ENCODE measurements at regions of chr15 and their contacts with region 1.

Region 1: DNA sequence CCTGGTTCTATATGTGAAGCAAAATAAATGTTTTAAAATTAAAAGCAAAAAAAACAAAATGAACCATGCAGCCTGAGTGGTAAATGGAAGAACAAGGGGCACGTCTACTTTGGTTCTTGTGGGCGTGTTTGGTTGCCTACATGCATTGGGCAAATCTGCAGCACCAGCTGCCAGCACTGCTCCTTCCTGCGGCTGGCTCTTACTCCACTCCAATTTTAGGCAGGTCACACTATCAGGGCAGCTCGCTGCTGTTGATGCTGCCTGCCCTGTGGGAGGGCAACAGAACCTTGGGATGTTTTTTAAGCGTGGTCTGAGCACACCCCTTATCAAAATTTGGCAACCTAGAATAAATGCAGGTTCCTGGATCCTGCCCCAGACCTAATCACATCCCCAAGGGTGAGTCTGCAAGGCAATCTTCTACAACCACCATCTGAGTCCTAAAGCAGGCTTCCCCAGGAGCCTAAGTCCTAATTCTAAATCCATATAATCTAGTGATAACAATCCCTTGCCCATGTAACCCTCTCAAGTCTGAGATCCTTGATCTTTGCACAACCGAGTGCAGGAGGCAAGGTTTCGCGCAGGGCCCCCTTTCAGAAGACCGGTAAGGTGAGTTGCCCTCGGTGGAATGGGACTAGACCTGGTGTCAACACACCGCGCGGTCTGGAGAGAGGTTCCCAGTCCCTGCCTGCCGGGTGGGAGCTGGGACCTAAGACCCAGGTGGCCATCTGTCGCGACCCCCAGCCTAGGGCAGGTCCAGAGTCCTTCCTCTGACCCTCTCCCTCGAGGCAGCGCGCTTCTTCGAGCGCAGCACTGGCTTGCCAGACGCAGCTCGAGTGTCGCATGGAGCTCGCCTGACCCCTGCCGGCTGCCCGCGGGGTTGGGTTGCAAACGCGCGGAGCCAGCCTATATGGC is 15.9 kb downstream of the IVD start:
- DNase-seq: peak; percentile 52
- ATAC-seq: peak; percentile 99
- H3K4me3 ChIP-seq: no peak overlapping the region
- H3K27ac ChIP-seq: no peak overlapping the region
- H3K4me1 ChIP-seq: no peaks in the 10 kb centered on the region
- H3K27me3 ChIP-seq: no peaks in the 10 kb centered on the region; the same call in 1 of the 2 replicates
- CTCF ChIP-seq: peak; percentile 93
- POLR2A ChIP-seq: no peak
- RAD21 ChIP-seq: peak; percentile 96

Region 2: GRCh38 chr15:40044717-40045571 is 376.6 kb before region 1 on chr15:
- CTCF ChIA-PET with region 1: no interaction called
- POLR2A ChIA-PET with region 1: no interaction called
- dilution Hi-C with region 1: no loop called
- in situ Hi-C with region 1: loop called (anchors 10 kb)
- intact Hi-C with region 1: no loop called
- DNase-seq: peak; percentile 76
- ATAC-seq: peak; percentile 99
- H3K4me3 ChIP-seq: no peak overlapping the region
- H3K27ac ChIP-seq: no peak overlapping the region
- H3K4me1 ChIP-seq: peaks cover 20% of the 10 kb centered on the region
- H3K27me3 ChIP-seq: no peaks in the 10 kb centered on the region
- CTCF ChIP-seq: peak; percentile 99
- POLR2A ChIP-seq: peak; percentile 74
- RAD21 ChIP-seq: peak; percentile 100

Region 3: GRCh38 chr15:40274350-40275274 is 146.9 kb before region 1 on chr15:
- CTCF ChIA-PET with region 1: interaction called, 3 read pairs
- POLR2A ChIA-PET with region 1: no interaction called
- dilution Hi-C with region 1: no loop called
- in situ Hi-C with region 1: loop called (anchors 5 kb)
- intact Hi-C with region 1: loop called (anchors 1 kb)
- DNase-seq: peak; percentile 78
- ATAC-seq: peak; percentile 86
- H3K4me3 ChIP-seq: no peak overlapping the region
- H3K27ac ChIP-seq: no peak overlapping the region
- H3K4me1 ChIP-seq: no peaks in the 10 kb centered on the region
- H3K27me3 ChIP-seq: peaks cover 21% of the 10 kb centered on the region
- CTCF ChIP-seq: peak; percentile 100; the same call in 1 of the 2 replicates
- POLR2A ChIP-seq: no peak
- RAD21 ChIP-seq: peak; percentile 98

Region 4: GRCh38 chr15:40338041-40338657 is 83.4 kb before region 1 on chr15:
- CTCF ChIA-PET with region 1: interaction called, 5 read pairs
- POLR2A ChIA-PET with region 1: no interaction called
- dilution Hi-C with region 1: no loop called
- in situ Hi-C with region 1: no loop called
- intact Hi-C with region 1: loop called (anchors 1 kb)
- DNase-seq: peak; percentile 60
- ATAC-seq: peak; percentile 8; the same call in 1 of the 2 replicates
- H3K4me3 ChIP-seq: no peak overlapping the region
- H3K27ac ChIP-seq: peak overlapping the region; percentile 97
- H3K4me1 ChIP-seq: peaks cover 36% of the 10 kb centered on the region
- H3K27me3 ChIP-seq: no peaks in the 10 kb centered on the region
- CTCF ChIP-seq: peak; percentile 69
- POLR2A ChIP-seq: no peak
- RAD21 ChIP-seq: peak; percentile 76

Region 5: GRCh38 chr15:40367686-40368611 is 53.6 kb before region 1 on chr15:
- CTCF ChIA-PET with region 1: no interaction called
- POLR2A ChIA-PET with region 1: no interaction called
- dilution Hi-C with region 1: no loop called
- in situ Hi-C with region 1: no loop called
- intact Hi-C with region 1: loop called (anchors 1 kb)
- DNase-seq: peak; percentile 87
- ATAC-seq: peak; percentile 95
- H3K4me3 ChIP-seq: no peak overlapping the region
- H3K27ac ChIP-seq: no peak overlapping the region; the same call in 1 of the 2 replicates
- H3K4me1 ChIP-seq: peaks cover 2% of the 10 kb centered on the region
- H3K27me3 ChIP-seq: peaks cover 5% of the 10 kb centered on the region; the same call in 1 of the 2 replicates
- CTCF ChIP-seq: peak; percentile 95
- POLR2A ChIP-seq: no peak
- RAD21 ChIP-seq: peak; percentile 63

Region 6: GRCh38 chr15:40618023-40618422 is 196.5 kb after region 1 on chr15:
- CTCF ChIA-PET with region 1: no interaction called
- POLR2A ChIA-PET with region 1: no interaction called
- dilution Hi-C with region 1: no loop called
- in situ Hi-C with region 1: no loop called
- intact Hi-C with region 1: no loop called
- DNase-seq: no peak
- ATAC-seq: no peak
- H3K4me3 ChIP-seq: no peak overlapping the region
- H3K27ac ChIP-seq: no peak overlapping the region
- H3K4me1 ChIP-seq: no peaks in the 10 kb centered on the region
- H3K27me3 ChIP-seq: no peaks in the 10 kb centered on the region
- CTCF ChIP-seq: no peak
- POLR2A ChIP-seq: no peak
- RAD21 ChIP-seq: no peak

Measured in IMR-90 (cell line).